Caco-2 (cell line): ENCODE measurements at regions of chr4 and their contacts with region 1.

Region 1: DNA sequence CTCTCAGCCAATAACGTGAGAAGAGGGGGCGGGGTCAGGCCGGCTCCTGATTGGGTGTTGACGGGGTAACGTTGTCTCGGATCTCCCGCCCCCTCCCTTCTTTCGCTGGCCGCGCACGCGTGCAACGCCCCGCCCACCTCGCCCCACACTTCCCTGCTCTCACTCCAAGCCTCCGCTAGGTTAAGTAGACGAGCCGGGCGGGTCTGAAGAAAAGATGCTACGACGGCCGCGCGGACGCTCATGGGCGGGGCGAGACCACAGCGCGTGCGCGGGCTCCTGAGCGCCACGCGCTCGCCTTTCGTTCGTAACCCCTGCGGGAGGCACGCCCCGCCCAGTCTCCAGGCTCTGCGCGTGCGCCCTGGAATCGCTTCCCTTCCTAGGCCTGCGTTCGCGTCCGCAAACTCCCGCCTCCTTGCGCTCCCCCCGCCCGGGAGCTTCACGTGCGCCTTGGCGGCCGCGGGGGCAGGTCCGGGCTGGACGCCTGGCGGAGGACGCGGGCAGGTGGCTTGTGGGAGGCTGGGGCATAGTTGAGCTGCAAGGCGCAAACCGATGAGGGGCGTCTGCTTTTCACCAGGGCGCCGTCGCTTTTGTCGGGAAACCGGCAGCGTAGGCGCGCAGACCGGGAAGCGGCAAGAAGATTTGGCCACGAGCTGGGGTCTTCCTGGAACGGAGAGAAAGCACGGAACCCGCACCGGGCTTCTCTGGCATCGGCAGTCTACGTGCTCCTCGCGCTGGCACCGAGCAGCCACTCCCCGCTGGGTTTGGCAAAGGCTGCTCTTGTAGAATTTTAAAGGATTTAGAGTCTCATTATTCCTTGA is 467 bp upstream of the PGRMC2 start:
- DNase-seq: peak; percentile 99
- H3K4me3 ChIP-seq: peak overlapping the region; percentile 92
- H3K4me3 Mint-ChIP-seq: peak overlapping the region; percentile 91
- H3K27ac Mint-ChIP-seq: peak overlapping the region; percentile 82
- H3K4me1 ChIP-seq: peaks cover 30% of the 10 kb centered on the region
- H3K4me1 Mint-ChIP-seq: peaks cover 29% of the 10 kb centered on the region
- H3K27me3 ChIP-seq: no peaks in the 10 kb centered on the region
- H3K27me3 Mint-ChIP-seq: no peaks in the 10 kb centered on the region
- CTCF ChIP-seq: peak in 1 of 2 experiments; percentile 34

Region 2: GRCh38 chr4:127965062-127965802 is 322.8 kb before region 1 on chr4 and contains the starts of genes ABHD18 and MFSD8:
- CTCF ChIA-PET with region 1: no interaction called
- POLR2A ChIA-PET with region 1: no interaction called
- intact Hi-C with region 1: loop called (anchors 10 kb)
- DNase-seq: peak; percentile 99
- H3K4me3 ChIP-seq: peak within 1 kb of the TSS; percentile 66
- H3K4me3 Mint-ChIP-seq: peak within 1 kb of the TSS; percentile 97
- H3K27ac Mint-ChIP-seq: peak within 1 kb of the TSS; percentile 97
- H3K4me1 ChIP-seq: peaks cover 4% of the 10 kb centered on the region; the same call in 1 of the 2 replicates
- H3K4me1 Mint-ChIP-seq: no peaks in the 10 kb centered on the region
- H3K27me3 ChIP-seq: no peaks in the 10 kb centered on the region
- H3K27me3 Mint-ChIP-seq: no peaks in the 10 kb centered on the region
- CTCF ChIP-seq: peak; percentile 34 to 44
- total RNA-seq, gene ABHD18: 14.9 and 15.1 TPM in 2 replicates
- total RNA-seq, gene MFSD8: 24.3 and 27.9 TPM in 2 replicates

Region 3: DNA sequence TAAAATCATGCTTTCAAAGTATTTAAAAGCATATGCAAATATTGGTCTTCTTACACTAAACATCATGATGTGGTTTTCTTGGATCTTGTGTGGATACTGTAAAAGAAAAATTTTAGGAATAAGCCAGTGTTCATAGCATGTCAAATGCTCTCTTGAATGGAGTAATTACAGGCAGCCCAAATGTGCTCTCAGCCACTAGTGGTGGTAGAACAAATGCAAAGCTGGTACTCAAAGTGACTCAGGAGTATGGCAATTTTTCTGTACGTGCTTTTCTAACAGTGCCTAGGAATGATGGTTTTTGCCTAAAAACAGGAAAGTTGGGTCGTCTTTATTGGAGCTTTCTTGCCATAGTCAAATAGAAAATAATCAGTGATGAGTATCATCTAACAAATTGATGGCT is 20.3 kb before region 1 on chr4:
- CTCF ChIA-PET with region 1: no interaction called
- POLR2A ChIA-PET with region 1: no interaction called
- intact Hi-C with region 1: loop called (anchors 2 kb)
- DNase-seq: no peak
- H3K4me3 ChIP-seq: no peak overlapping the region
- H3K4me3 Mint-ChIP-seq: peak overlapping the region; percentile 32
- H3K27ac Mint-ChIP-seq: peak overlapping the region; percentile 63
- H3K4me1 ChIP-seq: peaks cover 30% of the 10 kb centered on the region
- H3K4me1 Mint-ChIP-seq: no peaks in the 10 kb centered on the region
- H3K27me3 ChIP-seq: no peaks in the 10 kb centered on the region
- H3K27me3 Mint-ChIP-seq: no peaks in the 10 kb centered on the region
- CTCF ChIP-seq: no peak

Region 4: DNA sequence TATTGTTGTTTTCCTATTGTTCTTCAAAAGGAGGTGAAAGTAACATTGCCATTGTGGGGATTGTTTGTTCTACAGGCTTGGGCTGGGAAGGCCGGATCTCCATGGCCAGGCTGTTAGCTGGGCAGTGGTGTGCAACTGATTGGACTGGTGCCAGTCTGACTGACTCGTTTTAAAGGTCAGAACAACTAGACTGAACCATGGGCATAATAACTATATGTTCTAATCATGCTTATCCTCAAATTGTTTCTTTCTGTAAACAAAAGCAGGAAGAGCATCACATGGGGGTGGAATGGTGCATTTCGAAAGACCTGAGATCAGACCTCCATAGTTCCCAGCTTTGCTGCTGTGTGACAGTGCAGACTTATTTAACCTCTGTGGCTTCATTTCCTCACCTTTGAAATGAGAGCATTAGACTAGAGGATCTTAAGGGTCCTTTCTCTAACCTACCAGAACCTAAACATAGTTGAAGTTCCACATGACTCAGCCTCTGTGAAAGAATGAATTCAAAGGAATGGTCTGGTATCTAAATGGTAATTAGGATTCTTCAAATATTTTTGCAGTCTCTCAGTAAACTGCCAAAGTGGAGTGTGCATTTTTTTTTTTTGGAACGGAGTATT is 66.2 kb after region 1 on chr4:
- CTCF ChIA-PET with region 1: no interaction called
- POLR2A ChIA-PET with region 1: no interaction called
- intact Hi-C with region 1: loop called (anchors 2 kb)
- DNase-seq: peak in 1 of 2 experiments; percentile 48
- H3K4me3 ChIP-seq: no peak overlapping the region
- H3K4me3 Mint-ChIP-seq: peak overlapping the region; percentile 34
- H3K27ac Mint-ChIP-seq: peak overlapping the region; percentile 69
- H3K4me1 ChIP-seq: peaks cover 72% of the 10 kb centered on the region
- H3K4me1 Mint-ChIP-seq: peaks cover 30% of the 10 kb centered on the region
- H3K27me3 ChIP-seq: no peaks in the 10 kb centered on the region
- H3K27me3 Mint-ChIP-seq: no peaks in the 10 kb centered on the region
- CTCF ChIP-seq: no peak

Region 5: GRCh38 chr4:128565565-128566186 is 277.6 kb after region 1 on chr4:
- CTCF ChIA-PET with region 1: no interaction called
- POLR2A ChIA-PET with region 1: no interaction called
- intact Hi-C with region 1: loop called (anchors 5 kb)
- DNase-seq: peak; percentile 62 to 70
- H3K4me3 ChIP-seq: no peak overlapping the region
- H3K4me3 Mint-ChIP-seq: no peak overlapping the region
- H3K27ac Mint-ChIP-seq: no peak overlapping the region
- H3K4me1 ChIP-seq: peaks cover 28% of the 10 kb centered on the region
- H3K4me1 Mint-ChIP-seq: peaks cover 43% of the 10 kb centered on the region
- H3K27me3 ChIP-seq: no peaks in the 10 kb centered on the region
- H3K27me3 Mint-ChIP-seq: no peaks in the 10 kb centered on the region
- CTCF ChIP-seq: peak; percentile 40 to 69